Dendritic cell treated with granulocyte-macrophage colony-stimulating factor and Interleukin-4, amounts not matched to agents 40 ng/mL and 50 ng/mL, for 4 days (primary cell): ENCODE measurements at regions of chr14 and their contacts with region 1.

Region 1: DNA sequence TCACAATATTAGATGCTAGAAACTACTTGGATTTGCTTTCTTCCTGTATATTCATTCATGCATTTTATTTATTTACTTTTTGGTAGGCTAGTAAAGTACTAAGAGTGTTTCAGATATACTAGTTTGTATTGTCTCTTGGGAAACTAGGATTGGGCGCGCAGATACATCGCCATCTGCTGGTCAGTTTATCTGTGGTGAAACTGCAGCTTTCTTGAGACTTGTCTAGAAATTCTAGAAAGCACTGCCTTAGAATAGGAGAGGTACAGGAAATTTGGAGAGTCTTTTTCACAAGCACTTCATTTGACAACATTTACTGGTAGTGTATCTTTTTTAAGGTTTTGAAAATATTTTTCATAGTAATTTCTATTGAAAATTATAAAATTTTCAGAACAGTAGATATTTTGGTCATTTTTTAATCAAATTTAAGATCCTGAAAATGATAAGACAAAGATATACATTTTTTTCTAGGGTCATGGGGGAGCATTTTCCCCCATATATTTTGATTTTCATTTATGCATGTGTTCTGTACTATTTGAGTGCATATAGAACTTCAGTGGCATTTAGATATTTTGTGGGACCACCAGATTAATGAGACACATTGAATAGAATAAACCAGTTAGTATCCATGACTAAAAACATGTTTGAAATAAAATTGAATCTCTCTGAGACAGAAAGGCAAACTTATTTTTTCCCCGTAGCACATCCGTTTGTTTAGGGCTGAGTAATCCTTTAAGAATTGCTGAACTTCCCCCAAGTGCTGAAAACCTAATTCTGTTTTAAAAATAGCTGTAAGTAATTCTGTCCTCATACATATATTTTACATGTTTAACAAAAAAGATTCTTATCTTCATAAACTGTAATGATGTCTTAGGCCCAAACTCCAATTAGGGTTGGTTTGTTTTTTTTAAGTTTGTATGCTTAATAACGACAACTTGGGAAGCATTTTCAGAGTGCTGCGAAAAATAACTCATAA is 44.5 kb downstream of the SLC38A6 start:
- H3K4me3 Mint-ChIP-seq: no peak overlapping the region
- H3K27ac Mint-ChIP-seq: no peak overlapping the region
- H3K4me1 Mint-ChIP-seq: peaks cover 10% of the 10 kb centered on the region
- H3K27me3 Mint-ChIP-seq: no peaks in the 10 kb centered on the region

Region 2: DNA sequence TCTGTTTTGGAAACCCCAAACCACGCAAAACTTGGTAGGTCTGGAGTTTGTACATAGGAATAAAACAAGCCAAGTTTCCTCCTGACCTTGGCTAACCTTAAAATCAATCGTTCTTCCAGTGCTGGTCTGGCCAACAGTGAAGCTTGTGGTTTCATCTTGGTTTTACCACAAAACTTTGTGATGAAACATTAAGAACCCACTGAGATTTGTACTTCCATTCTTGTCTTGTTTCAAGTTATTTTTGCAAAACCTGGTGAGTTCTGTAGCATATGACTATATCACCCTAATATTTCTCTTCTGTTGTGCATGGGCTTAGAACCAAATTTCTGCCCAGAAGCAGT is 402.6 kb before region 1 on chr14:
- intact Hi-C with region 1: loop called (anchors 1 kb)
- H3K4me3 Mint-ChIP-seq: no peak overlapping the region
- H3K27ac Mint-ChIP-seq: no peak overlapping the region
- H3K4me1 Mint-ChIP-seq: peaks cover 5% of the 10 kb centered on the region
- H3K27me3 Mint-ChIP-seq: peaks cover 50% of the 10 kb centered on the region

Region 3: DNA sequence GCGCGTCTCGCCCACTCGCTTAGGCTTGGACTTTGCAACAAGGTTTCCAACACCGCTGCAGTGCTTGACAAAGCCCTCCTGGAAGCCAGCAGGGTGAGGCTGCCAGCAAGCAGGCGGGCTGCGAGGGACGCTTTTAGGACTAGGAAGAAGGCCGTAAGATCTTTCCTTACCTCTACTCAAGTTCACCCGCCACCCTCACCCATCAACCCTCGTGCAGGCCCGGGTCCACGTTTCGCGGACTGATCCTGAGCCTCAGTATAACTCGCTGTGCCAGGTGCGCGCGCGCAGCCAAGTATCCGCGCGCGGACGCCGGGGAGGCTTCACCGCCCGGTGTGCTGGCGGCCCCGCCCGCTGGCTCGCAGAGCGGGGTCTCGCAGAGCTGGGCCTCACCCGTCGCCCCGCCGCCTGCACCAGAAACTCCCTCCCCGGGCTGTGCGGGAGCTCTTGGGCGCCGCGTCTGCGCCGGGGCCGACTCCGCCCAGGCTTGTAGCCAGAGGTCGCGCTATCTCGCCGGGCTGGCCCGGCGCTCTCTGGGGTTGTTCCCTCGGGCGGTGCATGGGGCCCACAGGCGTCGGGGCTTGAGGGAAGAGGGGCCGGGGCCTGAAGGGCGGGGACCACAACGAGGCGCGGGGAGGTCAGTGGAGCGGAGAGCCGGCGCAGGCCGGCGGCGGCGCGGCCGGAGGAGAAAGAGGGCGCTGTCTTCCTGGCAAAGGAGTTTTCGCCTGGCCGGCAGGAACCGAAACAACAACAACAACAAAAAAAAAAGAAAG is 368.7 kb before region 1 on chr14:
- intact Hi-C with region 1: loop called (anchors 2 kb)
- H3K4me3 Mint-ChIP-seq: peak overlapping the region; percentile 82
- H3K27ac Mint-ChIP-seq: peak overlapping the region; percentile 83
- H3K4me1 Mint-ChIP-seq: peaks cover 53% of the 10 kb centered on the region
- H3K27me3 Mint-ChIP-seq: peaks cover 93% of the 10 kb centered on the region

Region 4: GRCh38 chr14:60989599-60989998 is 35.9 kb before region 1 on chr14:
- intact Hi-C with region 1: loop called (anchors 5 kb)
- H3K4me3 Mint-ChIP-seq: no peak overlapping the region
- H3K27ac Mint-ChIP-seq: no peak overlapping the region
- H3K4me1 Mint-ChIP-seq: peaks cover 19% of the 10 kb centered on the region
- H3K27me3 Mint-ChIP-seq: no peaks in the 10 kb centered on the region

Region 5: GRCh38 chr14:61252369-61253063 is 227.0 kb after region 1 on chr14:
- intact Hi-C with region 1: loop called (anchors 2 kb)
- H3K4me3 Mint-ChIP-seq: no peak overlapping the region
- H3K27ac Mint-ChIP-seq: no peak overlapping the region
- H3K4me1 Mint-ChIP-seq: peaks cover 15% of the 10 kb centered on the region
- H3K27me3 Mint-ChIP-seq: peaks cover 15% of the 10 kb centered on the region